Sciatic nerve (tissue), 2 donors: ENCODE measurements at regions of chr5 and their contacts with region 1.

Region 1: GRCh38 chr5:129857116-129857515 is 47.1 kb upstream of the CHSY3 start:
- DNase-seq: no peak
- ATAC-seq: peak; percentile 52

Region 2: DNA sequence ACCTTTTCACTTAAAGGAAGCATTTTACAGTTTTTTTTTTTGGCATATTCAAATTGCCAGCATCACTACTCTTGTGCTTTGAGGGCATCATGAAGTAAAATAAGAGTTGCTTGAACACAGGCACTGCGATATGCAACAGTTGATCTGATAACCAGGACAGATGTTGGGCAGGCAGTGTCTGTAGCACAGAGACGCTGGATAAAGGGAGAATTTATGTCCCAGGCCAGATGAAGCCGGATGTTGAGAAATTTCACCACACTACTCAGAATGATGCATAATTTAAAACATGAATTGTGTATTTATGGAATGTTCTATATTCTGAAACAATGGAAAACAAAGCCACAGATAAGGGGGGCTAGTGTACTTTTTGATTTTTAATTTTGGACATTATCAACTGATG is 1702.2 kb before region 1 on chr5:
- intact Hi-C with region 1: loop called (anchors 5 kb)
- DNase-seq: no peak
- ATAC-seq: no peak

Region 3: GRCh38 chr5:131581702-131582101 is 1724.6 kb after region 1 on chr5:
- intact Hi-C with region 1: no loop called
- DNase-seq: no peak
- ATAC-seq: no peak